Left lung (tissue), 14 donors: ENCODE measurements at regions of chr11 and their contacts with region 1.

Region 1: GRCh38 chr11:61893981-61894380 is 2.6 kb upstream of the FADS3 start:
- DNase-seq: peak in 1 of 4 donors; percentile 60
- ATAC-seq: no peak
- H3K4me3 ChIP-seq: no peak overlapping the region
- H3K27ac ChIP-seq: peak overlapping the region in 1 of 2 donors; percentile 18
- H3K4me1 ChIP-seq: peaks cover 6 to 35% of the 10 kb centered on the region in 2 donors
- H3K27me3 ChIP-seq: peaks cover 0 to 22% of the 10 kb centered on the region in 2 donors
- CTCF ChIP-seq: no peak

Region 2: DNA sequence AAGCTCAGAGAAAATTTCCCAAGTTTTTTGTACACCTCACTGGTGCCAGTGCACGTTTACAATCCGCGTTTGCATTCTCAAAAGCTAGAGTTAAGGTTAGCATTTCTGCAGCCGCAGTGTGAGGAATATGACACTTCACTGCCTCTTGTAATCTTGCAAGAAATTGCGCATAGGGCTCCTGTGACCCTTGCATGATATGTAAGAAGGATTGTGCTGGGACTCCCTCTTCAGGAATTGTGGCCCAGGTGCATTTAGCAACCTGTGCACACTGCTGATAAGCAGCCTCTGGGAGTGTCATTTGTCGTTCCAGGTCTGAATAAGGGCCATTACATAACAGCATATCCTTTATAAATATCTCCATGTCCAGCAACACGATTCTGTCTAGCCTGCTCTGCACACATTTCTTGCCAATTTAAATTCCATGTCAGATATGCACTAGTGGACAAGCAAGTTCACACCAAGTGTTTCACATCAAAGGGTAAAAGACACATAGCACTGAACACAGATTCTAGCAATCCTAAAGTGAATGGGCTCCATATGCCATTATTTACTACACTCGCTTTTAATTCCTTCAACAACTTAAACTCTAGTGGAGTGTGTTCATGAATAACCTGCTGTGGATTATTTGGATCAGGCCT is 160.6 kb after region 1 on chr11:
- intact Hi-C with region 1: no loop called
- DNase-seq: peak in 1 of 4 donors; percentile 36
- ATAC-seq: peak; percentile 69
- H3K4me3 ChIP-seq: no peak overlapping the region
- H3K27ac ChIP-seq: no peak overlapping the region
- H3K4me1 ChIP-seq: no peaks in the 10 kb centered on the region
- H3K27me3 ChIP-seq: no peaks in the 10 kb centered on the region
- CTCF ChIP-seq: peak; percentile 26 to 54

Region 3: DNA sequence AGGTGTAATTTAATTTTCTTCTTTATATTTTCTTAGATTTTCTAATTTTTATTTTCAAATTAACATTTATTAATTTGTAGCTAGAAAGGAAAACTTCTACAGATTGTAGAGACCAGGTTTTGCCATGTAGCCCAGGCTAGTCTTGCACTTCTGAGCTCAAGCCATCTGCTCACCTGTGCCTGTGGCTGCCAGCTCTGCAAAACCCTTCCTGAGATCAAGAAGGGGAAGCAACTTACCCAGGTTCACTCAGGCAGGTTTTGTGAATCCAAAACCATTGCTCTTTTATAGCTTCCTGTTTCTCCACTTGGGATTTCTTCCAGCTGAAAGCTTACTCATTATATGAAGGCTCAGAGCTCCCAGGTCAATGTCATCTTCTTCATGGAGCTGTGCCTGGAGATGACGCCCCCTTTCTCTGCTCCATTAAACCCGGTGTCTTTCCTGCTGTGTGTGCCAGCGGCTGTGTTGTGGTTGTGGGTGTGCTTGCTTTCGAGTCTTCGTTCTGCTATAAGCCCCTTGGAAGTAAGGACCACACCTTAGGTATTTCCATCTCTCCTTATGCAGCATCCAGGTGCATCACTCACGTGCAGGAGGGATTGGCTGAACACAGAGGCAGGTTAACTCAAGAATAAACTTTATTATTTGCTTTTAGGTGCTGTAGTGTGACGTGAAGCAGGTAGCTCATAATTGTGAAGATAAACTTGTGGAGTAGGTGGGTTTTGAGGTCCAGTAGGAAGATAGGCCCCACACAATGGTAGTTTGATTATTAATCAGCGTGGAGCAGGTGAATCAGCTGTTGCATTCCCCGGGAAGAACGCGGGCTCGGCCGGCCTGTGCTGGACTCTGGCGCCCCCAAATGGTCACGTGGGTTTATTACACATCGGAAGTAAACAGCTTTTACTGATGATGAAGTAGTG is 187.7 kb after region 1 on chr11:
- intact Hi-C with region 1: loop called in 1 of 2 experiments (anchors 2 kb)
- DNase-seq: peak; percentile 51 to 93 (median 75)
- ATAC-seq: peak; percentile 99
- H3K4me3 ChIP-seq: no peak overlapping the region
- H3K27ac ChIP-seq: no peak overlapping the region
- H3K4me1 ChIP-seq: peaks cover 0 to 12% of the 10 kb centered on the region in 2 donors
- H3K27me3 ChIP-seq: no peaks in the 10 kb centered on the region
- CTCF ChIP-seq: peak; percentile 77 to 90